ENCODE measurements at regions of chr4 and their contacts with region 1.

Region 1: GRCh38 chr4:174522183-174523048 is at the start of gene HPGD:
- DNase-seq: peak; percentile 61
- ATAC-seq: peak; percentile 74
- H3K4me3 ChIP-seq: peak within 1 kb of the TSS; percentile 90
- H3K27ac ChIP-seq: peak within 1 kb of the TSS; percentile 56
- H3K4me1 ChIP-seq: peaks cover 17% of the 10 kb centered on the region
- H3K27me3 ChIP-seq: no peaks in the 10 kb centered on the region
- CTCF ChIP-seq: no peak; the same call in 1 of the 2 replicates
- total RNA-seq, gene HPGD: 32.3 and 33.5 TPM in 2 replicates

Region 2: GRCh38 chr4:174365018-174365587 is 157.3 kb before region 1 on chr4:
- CTCF ChIA-PET with region 1: no interaction called
- POLR2A ChIA-PET with region 1: no interaction called
- intact Hi-C with region 1: loop called (anchors 1 kb)
- DNase-seq: peak; percentile 54
- ATAC-seq: no peak
- H3K4me3 ChIP-seq: no peak overlapping the region
- H3K27ac ChIP-seq: no peak overlapping the region
- H3K4me1 ChIP-seq: 0 out of 2 replicates have a peak, but pooled peaks cover 8% of the 10 kb centered on the region
- H3K27me3 ChIP-seq: no peaks in the 10 kb centered on the region
- CTCF ChIP-seq: peak; percentile 62; the same call in 1 of the 2 replicates

Region 3: GRCh38 chr4:174377613-174378012 is 144.8 kb before region 1 on chr4:
- CTCF ChIA-PET with region 1: no interaction called
- POLR2A ChIA-PET with region 1: no interaction called
- intact Hi-C with region 1: loop called (anchors 1 kb)
- DNase-seq: peak; percentile 87
- ATAC-seq: peak; percentile 98
- H3K4me3 ChIP-seq: no peak overlapping the region
- H3K27ac ChIP-seq: peak overlapping the region; percentile 74
- H3K4me1 ChIP-seq: peaks cover 18% of the 10 kb centered on the region
- H3K27me3 ChIP-seq: no peaks in the 10 kb centered on the region
- CTCF ChIP-seq: no peak

Region 4: DNA sequence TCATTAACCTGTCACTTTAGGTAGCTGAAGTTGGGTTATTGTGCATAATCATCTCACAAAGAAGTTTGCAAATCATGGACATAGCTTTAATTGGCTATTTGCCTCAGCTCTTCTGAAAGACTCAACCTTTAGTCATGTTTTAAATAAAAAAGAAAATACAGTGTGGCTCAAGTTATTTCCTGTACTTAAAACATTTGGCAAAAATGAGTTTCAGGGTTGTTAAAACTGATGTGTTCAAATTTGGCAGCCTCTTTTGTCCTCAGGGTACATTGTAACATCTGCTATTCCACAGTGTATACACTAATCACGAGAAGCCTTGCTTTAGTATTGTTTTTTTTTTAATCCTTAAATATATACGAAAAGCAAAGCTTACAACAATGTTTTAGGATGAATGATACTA is 31.4 kb after region 1 on chr4:
- CTCF ChIA-PET with region 1: no interaction called
- POLR2A ChIA-PET with region 1: interaction called, 4 read pairs
- intact Hi-C with region 1: loop called (anchors 2 kb)
- DNase-seq: peak; percentile 83
- ATAC-seq: peak; percentile 86
- H3K4me3 ChIP-seq: no peak overlapping the region
- H3K27ac ChIP-seq: peak overlapping the region; percentile 86
- H3K4me1 ChIP-seq: peaks cover 24% of the 10 kb centered on the region
- H3K27me3 ChIP-seq: no peaks in the 10 kb centered on the region
- CTCF ChIP-seq: no peak

Region 5: GRCh38 chr4:174626342-174627008 is 104.1 kb after region 1 on chr4:
- CTCF ChIA-PET with region 1: interaction called, 5 read pairs
- POLR2A ChIA-PET with region 1: no interaction called
- intact Hi-C with region 1: loop called (anchors 1 kb)
- DNase-seq: no peak
- ATAC-seq: no peak
- H3K4me3 ChIP-seq: no peak overlapping the region
- H3K27ac ChIP-seq: no peak overlapping the region
- H3K4me1 ChIP-seq: peaks cover 28% of the 10 kb centered on the region
- H3K27me3 ChIP-seq: no peaks in the 10 kb centered on the region
- CTCF ChIP-seq: no peak

Region 6: DNA sequence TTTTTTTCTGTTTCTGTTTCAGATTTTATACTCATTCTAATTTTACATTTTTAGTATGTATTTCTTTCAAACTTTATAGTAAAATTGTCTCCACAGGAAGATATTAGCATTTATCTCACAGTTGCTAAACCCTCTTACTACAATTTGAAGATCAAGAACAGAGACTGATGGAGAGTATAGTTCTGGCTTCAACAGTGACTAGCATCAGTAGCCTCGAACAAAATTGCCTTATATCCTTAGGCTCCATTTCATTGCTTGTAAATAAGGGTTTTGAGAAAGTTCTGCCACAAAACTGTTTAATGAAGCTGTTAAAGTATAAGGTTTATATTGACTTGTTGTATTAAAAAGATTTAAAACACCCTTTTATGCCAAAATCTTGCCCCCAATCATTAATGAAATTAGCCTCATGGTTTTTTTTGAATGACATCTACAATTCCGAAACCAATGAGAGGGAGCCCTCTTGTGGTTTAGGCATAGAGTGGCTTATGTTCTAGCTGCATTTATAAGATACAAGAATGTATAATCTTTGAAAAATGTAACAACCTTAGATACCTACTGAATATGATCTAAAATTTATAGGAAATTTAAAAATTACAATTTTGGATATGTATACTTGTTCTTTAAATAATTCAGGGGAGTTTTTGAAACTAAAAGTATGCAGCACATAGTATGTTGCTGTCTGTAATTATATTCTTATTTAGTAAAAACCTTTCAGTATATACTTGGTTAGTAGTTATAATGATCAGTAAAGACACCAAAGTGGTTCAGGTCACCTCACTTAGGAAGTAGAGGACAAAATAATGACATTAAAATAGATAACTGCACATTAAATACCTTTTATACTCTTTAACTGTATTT is 109.7 kb after region 1 on chr4:
- CTCF ChIA-PET with region 1: interaction called, 12 read pairs
- POLR2A ChIA-PET with region 1: no interaction called
- intact Hi-C with region 1: loop called (anchors 1 kb)
- DNase-seq: peak; percentile 50
- ATAC-seq: peak; percentile 39
- H3K4me3 ChIP-seq: no peak overlapping the region
- H3K27ac ChIP-seq: 0 out of 2 replicates have a peak overlapping the region, but pooled peaks have one; percentile 12
- H3K4me1 ChIP-seq: peaks cover 45% of the 10 kb centered on the region
- H3K27me3 ChIP-seq: no peaks in the 10 kb centered on the region
- CTCF ChIP-seq: peak; percentile 88

Region 7: GRCh38 chr4:174714393-174715211 is 192.2 kb after region 1 on chr4:
- CTCF ChIA-PET with region 1: no interaction called
- POLR2A ChIA-PET with region 1: no interaction called
- intact Hi-C with region 1: loop called (anchors 10 kb)
- DNase-seq: peak; percentile 68
- ATAC-seq: peak; percentile 60; the same call in 1 of the 2 replicates
- H3K4me3 ChIP-seq: no peak overlapping the region
- H3K27ac ChIP-seq: no peak overlapping the region
- H3K4me1 ChIP-seq: peaks cover 16% of the 10 kb centered on the region
- H3K27me3 ChIP-seq: no peaks in the 10 kb centered on the region
- CTCF ChIP-seq: peak; percentile 79